ENCODE measurements at regions of chr7 and their contacts with region 1.

Region 1: GRCh38 chr7:130421684-130422083 is 19.1 kb downstream of the CEP41 start:
- DNase-seq: no peak
- ATAC-seq: peak; percentile 42
- H3K4me3 ChIP-seq: no peak overlapping the region
- H3K27ac ChIP-seq: peak overlapping the region; percentile 63
- H3K4me1 ChIP-seq: peaks cover 33% of the 10 kb centered on the region
- H3K27me3 ChIP-seq: no peaks in the 10 kb centered on the region
- CTCF ChIP-seq: no peak

Region 2: GRCh38 chr7:130292682-130293257 is 128.9 kb before region 1 on chr7 and contains the start of gene CPA4:
- CTCF ChIA-PET with region 1: no interaction called
- POLR2A ChIA-PET with region 1: no interaction called
- intact Hi-C with region 1: loop called (anchors 1 kb)
- DNase-seq: peak; percentile 97
- ATAC-seq: peak; percentile 97
- H3K4me3 ChIP-seq: peak within 1 kb of the TSS; percentile 38
- H3K27ac ChIP-seq: peak within 1 kb of the TSS; percentile 66
- H3K4me1 ChIP-seq: peaks cover 44% of the 10 kb centered on the region
- H3K27me3 ChIP-seq: no peaks in the 10 kb centered on the region
- CTCF ChIP-seq: no peak
- total RNA-seq, gene CPA4: 10.1 and 22.1 TPM in 2 replicates

Region 3: GRCh38 chr7:130356121-130356875 is 65.4 kb before region 1 on chr7:
- CTCF ChIA-PET with region 1: no interaction called
- POLR2A ChIA-PET with region 1: no interaction called
- intact Hi-C with region 1: loop called (anchors 2 kb)
- DNase-seq: peak; percentile 97
- ATAC-seq: peak; percentile 89
- H3K4me3 ChIP-seq: peak overlapping the region; percentile 38; the same call in 1 of the 2 replicates
- H3K27ac ChIP-seq: peak overlapping the region; percentile 92
- H3K4me1 ChIP-seq: peaks cover 37% of the 10 kb centered on the region
- H3K27me3 ChIP-seq: no peaks in the 10 kb centered on the region
- CTCF ChIP-seq: no peak

Region 4: DNA sequence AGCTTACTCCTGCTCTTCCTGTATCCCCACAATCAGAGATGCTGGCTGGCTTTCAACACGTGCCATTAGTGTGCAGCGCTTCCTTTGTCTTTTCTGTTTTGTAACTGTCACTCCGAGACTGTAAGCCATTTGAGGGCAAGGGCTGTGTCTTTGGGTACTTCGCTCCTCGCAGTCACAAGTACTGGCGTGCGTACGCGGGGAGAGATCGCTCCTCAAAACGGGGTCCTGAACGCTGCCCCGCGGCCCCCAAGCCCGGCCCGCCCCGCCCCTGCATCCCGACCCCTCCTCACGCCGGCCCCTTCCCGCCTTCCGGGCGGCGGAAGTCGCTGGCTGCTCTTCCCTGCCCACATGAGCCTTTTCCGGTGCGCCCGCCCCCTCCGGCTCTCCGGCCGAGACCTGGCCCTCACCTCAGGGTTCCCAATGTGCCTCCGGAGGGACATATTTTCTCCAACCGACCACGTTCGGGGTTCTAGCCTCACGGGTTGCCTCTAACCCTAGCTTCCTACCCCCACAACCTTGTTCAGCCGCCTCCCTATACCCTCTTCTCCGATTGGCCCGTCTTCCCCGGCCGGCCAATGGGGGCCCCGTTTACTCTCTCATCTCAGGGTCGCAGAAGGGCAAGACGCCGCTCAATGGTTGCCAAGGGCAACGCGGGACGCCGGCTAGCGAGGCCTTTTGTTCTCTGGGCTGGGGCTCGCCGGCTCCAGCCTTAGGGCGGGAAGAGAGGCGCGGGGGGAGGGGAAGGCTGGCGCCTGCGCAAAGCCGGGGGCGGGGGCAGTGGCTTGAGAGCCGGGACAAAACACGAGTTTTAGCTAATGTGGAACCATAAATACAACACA is 19.1 kb after region 1 on chr7 and contains the start of gene CEP41:
- CTCF ChIA-PET with region 1: no interaction called
- POLR2A ChIA-PET with region 1: no interaction called
- intact Hi-C with region 1: loop called (anchors 1 kb)
- DNase-seq: peak; percentile 98
- ATAC-seq: peak; percentile 99
- H3K4me3 ChIP-seq: peak within 1 kb of the TSS; percentile 85
- H3K27ac ChIP-seq: peak within 1 kb of the TSS; percentile 85
- H3K4me1 ChIP-seq: peaks cover 15% of the 10 kb centered on the region
- H3K27me3 ChIP-seq: no peaks in the 10 kb centered on the region
- CTCF ChIP-seq: no peak
- total RNA-seq, gene CEP41: 10.4 and 10.7 TPM in 2 replicates

Region 5: DNA sequence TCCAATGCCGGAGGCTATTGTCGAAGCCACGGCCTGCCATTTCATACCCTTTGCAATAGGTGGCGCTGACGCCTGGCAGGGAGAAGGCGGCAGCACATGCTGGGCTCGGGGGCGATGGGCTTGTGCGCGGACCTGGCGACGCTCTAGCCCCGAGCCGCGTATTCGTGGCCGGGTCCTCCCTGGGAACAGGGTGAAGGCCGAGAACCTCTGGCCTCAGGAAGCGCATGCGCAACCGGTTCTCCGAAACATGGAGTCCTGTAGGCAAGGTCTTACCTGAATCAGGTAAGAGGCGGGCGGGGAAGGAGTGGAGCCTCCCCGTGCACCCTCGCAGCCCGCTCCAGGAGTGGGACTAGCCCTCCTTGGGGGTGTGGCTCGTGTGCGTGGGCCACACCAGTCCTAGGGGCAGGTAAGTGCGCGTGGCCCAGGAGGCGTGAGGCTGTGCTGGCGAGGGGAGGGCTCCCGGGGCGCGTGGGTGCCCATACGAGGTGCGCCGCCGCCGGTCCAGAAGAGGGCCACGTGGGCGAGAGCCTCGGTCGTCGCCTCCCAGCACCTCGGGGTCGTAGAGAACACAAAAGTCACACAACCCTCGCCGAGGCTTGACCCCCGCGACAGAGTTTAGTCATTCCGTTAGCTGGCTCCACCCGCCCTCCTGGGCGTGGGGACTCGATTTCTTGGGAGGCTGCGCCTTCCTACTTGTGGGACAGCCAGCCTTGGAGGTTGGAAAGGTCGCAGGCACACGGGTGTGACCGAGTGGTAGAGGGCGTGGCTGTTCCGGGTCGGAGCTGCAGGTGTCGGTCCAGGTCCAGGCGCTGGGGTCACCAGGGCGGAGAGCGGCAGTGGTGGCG is 64.7 kb after region 1 on chr7:
- CTCF ChIA-PET with region 1: no interaction called
- POLR2A ChIA-PET with region 1: no interaction called
- intact Hi-C with region 1: loop called (anchors 5 kb)
- DNase-seq: peak; percentile 85
- ATAC-seq: peak; percentile 74
- H3K4me3 ChIP-seq: peak overlapping the region; percentile 76
- H3K27ac ChIP-seq: peak overlapping the region; percentile 31; the same call in 1 of the 2 replicates
- H3K4me1 ChIP-seq: peaks cover 14% of the 10 kb centered on the region
- H3K27me3 ChIP-seq: no peaks in the 10 kb centered on the region
- CTCF ChIP-seq: peak; percentile 75

Region 6: DNA sequence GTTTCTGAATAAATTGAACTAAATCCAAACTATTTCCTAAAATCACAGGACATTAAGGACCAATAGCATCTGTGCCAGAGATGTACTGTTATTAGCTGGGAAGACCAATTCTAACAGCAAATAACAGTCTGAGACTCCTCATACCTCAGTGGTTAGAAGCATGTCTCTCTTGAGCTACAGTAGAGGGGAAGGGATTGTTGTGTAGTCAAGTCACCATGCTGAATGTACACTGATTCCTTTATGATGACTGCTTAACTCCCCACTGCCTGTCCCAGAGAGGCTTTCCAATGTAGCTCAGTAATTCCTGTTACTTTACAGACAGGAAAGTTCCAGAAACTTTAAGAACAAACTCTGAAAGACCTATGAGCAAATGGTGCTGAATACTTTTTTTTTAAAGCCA is 84.1 kb after region 1 on chr7:
- CTCF ChIA-PET with region 1: no interaction called
- POLR2A ChIA-PET with region 1: no interaction called
- intact Hi-C with region 1: no loop called
- DNase-seq: no peak
- ATAC-seq: no peak
- H3K4me3 ChIP-seq: no peak overlapping the region
- H3K27ac ChIP-seq: no peak overlapping the region
- H3K4me1 ChIP-seq: no peaks in the 10 kb centered on the region
- H3K27me3 ChIP-seq: no peaks in the 10 kb centered on the region
- CTCF ChIP-seq: no peak